Activated T-helper 2 cell treated with anti-CD3 and anti-CD28 coated beads, Interferon-gamma antibody, Interleukin-2, Interleukin-4, amounts not matched to agents 10 μg/mL and 5 μg/mL and 100 μg/mL, durations not matched to agents 14 hours and 24 hours and 36 hours (primary cell): ENCODE measurements at regions of chr15 and their contacts with region 1.

Region 1: DNA sequence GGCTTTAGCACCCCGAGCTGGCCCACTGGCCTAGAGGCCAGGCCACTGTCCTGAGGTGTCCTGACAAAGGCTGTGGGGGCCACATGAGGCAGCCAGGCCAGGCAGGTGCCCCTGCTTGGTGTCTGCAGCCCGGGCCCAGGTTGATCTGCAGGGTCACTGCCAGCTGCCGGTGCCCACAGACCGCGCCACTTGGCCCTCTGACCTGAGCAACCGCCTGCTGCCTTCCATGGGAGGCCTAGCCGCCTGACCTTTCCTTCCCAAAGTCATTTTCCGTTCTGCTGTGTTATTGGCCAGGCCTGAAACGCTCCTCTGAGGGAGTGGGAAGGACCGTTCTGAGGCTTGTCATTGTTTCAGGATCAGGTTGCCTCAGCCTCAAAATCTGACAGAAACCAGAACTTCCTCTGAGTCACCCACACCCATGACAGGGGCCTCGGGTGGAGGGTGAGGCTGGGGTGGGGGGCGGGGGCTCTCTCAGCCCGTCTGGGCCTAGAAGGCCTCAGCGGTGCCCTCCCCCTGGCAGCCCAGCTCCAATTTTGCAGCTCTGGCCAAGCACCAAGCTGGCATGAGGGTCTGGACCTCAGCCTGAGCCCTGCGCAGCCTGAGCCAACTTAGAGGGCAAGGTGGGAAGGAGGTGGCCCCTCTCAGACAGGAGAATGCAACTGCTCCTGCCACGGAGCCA is 140.7 kb upstream of the MEF2A start:
- DNase-seq: peak; percentile 39
- H3K4me3 Mint-ChIP-seq: peak overlapping the region; percentile 9
- H3K27ac Mint-ChIP-seq: peak overlapping the region; percentile 80
- H3K4me1 Mint-ChIP-seq: peaks cover 38% of the 10 kb centered on the region
- H3K27me3 Mint-ChIP-seq: no peaks in the 10 kb centered on the region

Region 2: GRCh38 chr15:99565299-99566156 is 140.4 kb after region 1 on chr15 and contains the start of gene MEF2A:
- intact Hi-C with region 1: loop called (anchors 5 kb)
- DNase-seq: peak; percentile 92
- H3K4me3 Mint-ChIP-seq: peak within 1 kb of the TSS; percentile 98
- H3K27ac Mint-ChIP-seq: peak within 1 kb of the TSS; percentile 93
- H3K4me1 Mint-ChIP-seq: peaks cover 31% of the 10 kb centered on the region
- H3K27me3 Mint-ChIP-seq: peaks cover 8% of the 10 kb centered on the region
- total RNA-seq, gene MEF2A: 20.9 and 23.4 TPM in 2 replicates

Region 3: DNA sequence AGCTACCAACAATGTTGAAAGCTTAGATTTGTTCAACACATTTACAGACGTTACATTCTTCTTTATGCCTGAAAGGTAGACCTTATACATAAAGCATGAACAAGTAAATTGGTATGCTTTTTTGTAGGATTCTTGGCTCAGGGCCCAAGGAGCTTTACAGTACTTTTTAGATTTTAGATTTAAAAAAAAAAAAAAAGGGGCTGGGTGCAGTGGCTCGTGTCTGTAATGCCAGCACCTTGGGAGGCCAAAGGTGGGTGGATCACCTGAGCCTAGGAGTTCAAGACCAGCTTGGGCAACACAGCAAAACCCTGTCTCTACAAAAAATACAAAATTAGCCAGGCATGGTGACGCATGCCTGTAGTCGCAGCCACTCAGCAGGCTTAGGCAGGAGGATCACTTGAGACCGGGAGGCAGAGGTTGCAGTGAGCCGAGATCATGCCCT is 180.4 kb after region 1 on chr15:
- intact Hi-C with region 1: no loop called
- DNase-seq: no peak
- H3K4me3 Mint-ChIP-seq: no peak overlapping the region
- H3K27ac Mint-ChIP-seq: peak overlapping the region; percentile 69
- H3K4me1 Mint-ChIP-seq: peaks cover 23% of the 10 kb centered on the region
- H3K27me3 Mint-ChIP-seq: no peaks in the 10 kb centered on the region